Activated T-helper 2 cell treated with anti-CD3 and anti-CD28 coated beads, Interferon-gamma antibody, Interleukin-2, Interleukin-4, amounts not matched to agents 10 μg/mL and 5 μg/mL and 100 μg/mL, durations not matched to agents 14 hours and 24 hours and 36 hours (primary cell): ENCODE measurements at regions of chr1 and their contacts with region 1.

Region 1: DNA sequence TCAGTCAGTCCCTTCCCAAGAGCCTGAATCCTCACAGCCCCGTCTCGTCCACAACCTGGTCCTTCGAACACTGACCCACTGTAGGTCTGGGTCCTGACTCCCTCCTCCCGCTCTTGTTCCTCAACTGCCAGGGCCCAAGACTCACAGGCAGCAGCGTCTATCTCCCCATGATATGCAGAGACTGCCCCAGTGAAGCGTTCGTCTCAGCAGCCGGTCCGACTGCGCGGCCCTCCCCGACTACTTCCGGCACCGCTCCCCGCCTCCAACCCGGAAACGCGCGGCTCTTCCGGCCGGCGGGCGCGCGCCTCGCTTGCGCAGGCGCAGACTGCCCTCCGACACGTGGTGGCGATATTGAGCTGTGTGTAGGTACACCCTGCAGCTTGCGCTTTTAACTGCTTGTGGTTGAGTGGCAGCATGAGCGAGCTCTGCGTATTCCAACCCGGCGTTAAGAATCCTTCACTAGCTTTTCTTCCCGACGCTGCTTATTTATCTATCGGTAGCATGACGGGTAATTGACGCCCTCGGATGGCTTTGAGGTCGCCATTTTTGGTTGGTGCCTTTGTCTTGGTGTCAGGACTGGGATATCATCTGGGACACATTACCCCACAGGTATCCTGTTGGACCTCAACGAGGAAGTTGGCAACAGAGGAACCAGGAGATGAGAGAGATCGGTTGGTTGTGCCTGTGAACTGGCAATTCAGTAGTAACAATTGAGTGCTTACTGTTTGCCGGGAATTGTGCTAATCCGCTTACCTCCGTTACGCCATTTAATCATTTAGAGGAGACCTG is at the start of gene TAF12:
- DNase-seq: peak; percentile 88
- H3K4me3 Mint-ChIP-seq: peak within 1 kb of the TSS; percentile 99
- H3K27ac Mint-ChIP-seq: peak within 1 kb of the TSS; percentile 97
- H3K4me1 Mint-ChIP-seq: peaks cover 37% of the 10 kb centered on the region
- H3K27me3 Mint-ChIP-seq: no peaks in the 10 kb centered on the region
- total RNA-seq, gene TAF12: 30.8 and 32.0 TPM in 2 replicates

Region 2: GRCh38 chr1:28369371-28370238 is 273.4 kb before region 1 on chr1 and contains the start of gene PHACTR4:
- intact Hi-C with region 1: loop called (anchors 2 kb)
- DNase-seq: peak; percentile 77
- H3K4me3 Mint-ChIP-seq: peak within 1 kb of the TSS; percentile 91
- H3K27ac Mint-ChIP-seq: peak within 1 kb of the TSS; percentile 93
- H3K4me1 Mint-ChIP-seq: peaks cover 26% of the 10 kb centered on the region
- H3K27me3 Mint-ChIP-seq: no peaks in the 10 kb centered on the region
- total RNA-seq, gene PHACTR4: 30.2 and 32.1 TPM in 2 replicates

Region 3: GRCh38 chr1:28552758-28553663 is 90.0 kb before region 1 on chr1 and contains the start of gene TRNAU1AP:
- intact Hi-C with region 1: loop called (anchors 1 kb)
- DNase-seq: peak; percentile 97
- H3K4me3 Mint-ChIP-seq: peak within 1 kb of the TSS; percentile 91
- H3K27ac Mint-ChIP-seq: peak within 1 kb of the TSS; percentile 93
- H3K4me1 Mint-ChIP-seq: peaks cover 6% of the 10 kb centered on the region
- H3K27me3 Mint-ChIP-seq: no peaks in the 10 kb centered on the region
- total RNA-seq, gene TRNAU1AP: 49.4 and 55.4 TPM in 2 replicates

Region 4: GRCh38 chr1:29181413-29182225 is 538.6 kb after region 1 on chr1 and contains the start of gene SRSF4:
- intact Hi-C with region 1: loop called (anchors 2 kb)
- DNase-seq: peak; percentile 99
- H3K4me3 Mint-ChIP-seq: peak within 1 kb of the TSS; percentile 97
- H3K27ac Mint-ChIP-seq: peak within 1 kb of the TSS; percentile 97
- H3K4me1 Mint-ChIP-seq: peaks cover 44% of the 10 kb centered on the region
- H3K27me3 Mint-ChIP-seq: no peaks in the 10 kb centered on the region
- total RNA-seq, gene SRSF4: 145 TPM in 2 replicates